Pancreas (tissue), 10 donors: ENCODE measurements at regions of chr6 and their contacts with region 1.

Region 1: DNA sequence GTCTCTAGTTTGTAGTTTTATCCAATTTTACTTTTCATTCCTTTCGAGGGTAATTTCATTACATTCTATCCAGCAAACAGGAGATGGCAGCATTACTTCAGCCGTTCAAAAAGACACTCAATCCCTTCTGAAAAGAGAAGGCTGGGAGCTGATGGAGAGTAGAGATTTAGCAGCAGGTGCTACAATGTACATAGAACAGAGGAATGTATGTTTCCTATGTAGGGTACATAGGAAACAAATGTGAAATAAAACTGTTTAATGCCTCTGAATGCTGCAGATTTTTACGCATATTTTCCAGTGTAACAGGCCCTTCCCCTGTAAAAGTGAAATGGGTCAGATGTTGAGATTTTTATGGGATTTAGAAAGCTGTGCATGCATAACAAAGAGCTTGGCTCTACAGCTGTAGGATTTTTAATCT is 16.0 kb downstream of the RPS12 start:
- DNase-seq: no peak
- ATAC-seq: peak in 3 of 4 donors; percentile 45 to 62 (median 59)
- H3K4me3 ChIP-seq: no peak overlapping the region
- H3K27ac ChIP-seq: no peak overlapping the region
- H3K4me1 ChIP-seq: no peaks in the 10 kb centered on the region
- H3K27me3 ChIP-seq: no peaks in the 10 kb centered on the region
- CTCF ChIP-seq: peak in 2 of 4 donors; percentile 19 to 23

Region 2: GRCh38 chr6:132623106-132623845 is 207.1 kb before region 1 on chr6:
- intact Hi-C with region 1: no loop called
- DNase-seq: no peak
- ATAC-seq: no peak
- H3K4me3 ChIP-seq: no peak overlapping the region
- H3K27ac ChIP-seq: no peak overlapping the region
- H3K4me1 ChIP-seq: no peaks in the 10 kb centered on the region
- H3K27me3 ChIP-seq: no peaks in the 10 kb centered on the region
- CTCF ChIP-seq: no peak

Region 3: GRCh38 chr6:133502441-133503259 is 672.3 kb after region 1 on chr6:
- intact Hi-C with region 1: loop called in 1 of 3 experiments (anchors 10 kb)
- DNase-seq: peak in 2 of 6 donors; percentile 7 to 16
- ATAC-seq: peak in 3 of 4 donors; percentile 56 to 70 (median 60)
- H3K4me3 ChIP-seq: no peak overlapping the region
- H3K27ac ChIP-seq: no peak overlapping the region
- H3K4me1 ChIP-seq: peaks cover 3 to 9% (median 8%) of the 10 kb centered on the region in 3 donors
- H3K27me3 ChIP-seq: no peaks in the 10 kb centered on the region
- CTCF ChIP-seq: no peak